ENCODE measurements at regions of chr3 and their contacts with region 1.

Region 1: DNA sequence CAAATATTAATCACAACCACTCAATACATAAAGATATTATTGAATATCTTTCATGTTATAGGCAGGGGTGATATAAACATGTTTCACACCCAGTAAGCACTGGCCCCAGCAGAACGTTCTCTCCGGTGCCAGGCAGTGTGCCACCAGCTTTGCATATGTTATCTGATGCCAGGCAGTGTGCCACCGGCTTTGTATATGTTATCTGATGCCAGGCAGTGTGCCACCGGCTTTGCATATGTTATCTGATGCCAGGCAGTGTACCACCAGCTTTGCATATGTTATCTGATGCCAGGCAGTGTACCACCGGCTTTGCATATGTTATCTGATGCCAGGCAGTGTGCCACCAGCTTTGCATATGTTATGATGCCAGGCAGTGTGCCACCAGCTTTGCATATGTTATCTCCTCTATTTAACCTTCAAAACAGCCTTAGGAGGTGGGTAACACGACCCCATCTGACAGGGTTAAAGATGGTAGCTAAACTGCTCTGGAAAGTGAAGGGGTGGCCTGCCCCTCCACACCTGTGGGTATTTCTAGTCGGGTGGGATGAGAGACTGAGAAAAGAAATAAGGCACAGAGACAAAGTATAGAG is 6.9 kb downstream of the MUC20 start:
- DNase-seq: peak; percentile 41
- H3K4me3 ChIP-seq: no peak overlapping the region
- H3K27ac ChIP-seq: peak overlapping the region; percentile 51 to 78 (median 74)
- H3K4me1 ChIP-seq: peaks cover 3 to 30% (median 17%) of the 10 kb centered on the region in 4 donors
- H3K27me3 ChIP-seq: no peaks in the 10 kb centered on the region
- CTCF ChIP-seq: no peak
- EP300 ChIP-seq: no peak
- POLR2A ChIP-seq: no peak

Region 2: DNA sequence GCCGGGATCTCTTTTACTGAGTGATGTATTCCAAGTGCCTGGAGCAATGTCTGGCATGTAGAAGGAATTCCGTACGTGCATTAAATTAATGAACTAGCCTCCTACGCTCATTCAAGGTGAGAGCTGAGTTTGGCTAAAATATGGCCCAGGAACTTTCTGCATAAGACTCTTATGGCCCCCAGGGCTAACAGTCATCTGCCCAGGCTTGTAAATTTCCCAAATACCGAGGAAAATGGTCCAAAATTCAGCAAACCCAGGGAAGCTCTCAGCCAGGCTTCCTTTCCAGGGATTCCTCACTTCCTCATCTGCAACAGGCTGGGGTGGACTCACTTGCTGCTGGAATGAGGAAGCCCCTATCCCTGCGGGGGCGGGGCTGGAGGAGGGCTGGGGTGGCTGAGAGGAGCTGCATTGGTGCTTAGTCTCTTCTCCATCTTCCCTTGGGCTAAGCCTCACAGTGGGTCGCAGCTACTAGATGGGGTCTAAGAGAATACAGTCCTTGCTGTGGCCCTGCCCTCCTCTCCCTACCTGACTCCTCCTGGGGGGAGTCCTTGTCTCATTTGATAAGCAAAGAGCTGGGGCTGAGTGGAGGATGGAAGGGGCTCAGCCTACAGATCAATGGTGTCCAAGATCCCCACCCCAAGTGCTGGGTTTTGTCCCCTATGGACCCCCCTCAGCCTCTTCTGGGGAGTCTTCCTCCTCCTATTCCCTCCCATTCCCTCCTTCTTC is 115.5 kb before region 1 on chr3:
- in situ Hi-C with region 1: loop called in 3 of 4 experiments (anchors 5 to 25 kb)
- intact Hi-C with region 1: no loop called
- DNase-seq: peak; percentile 20
- H3K4me3 ChIP-seq: no peak overlapping the region
- H3K27ac ChIP-seq: no peak overlapping the region
- H3K4me1 ChIP-seq: peaks cover 0 to 4% (median 0%) of the 10 kb centered on the region in 4 donors
- H3K27me3 ChIP-seq: no peaks in the 10 kb centered on the region
- CTCF ChIP-seq: no peak
- EP300 ChIP-seq: no peak
- POLR2A ChIP-seq: no peak

Region 3: GRCh38 chr3:195931582-195932273 is 204.0 kb after region 1 on chr3:
- in situ Hi-C with region 1: no loop called
- intact Hi-C with region 1: no loop called
- DNase-seq: no peak
- H3K4me3 ChIP-seq: no peak overlapping the region
- H3K27ac ChIP-seq: no peak overlapping the region
- H3K4me1 ChIP-seq: peaks cover 0 to 13% (median 4%) of the 10 kb centered on the region in 4 donors
- H3K27me3 ChIP-seq: no peaks in the 10 kb centered on the region
- CTCF ChIP-seq: no peak
- EP300 ChIP-seq: no peak
- POLR2A ChIP-seq: no peak

Measured in transverse colon (tissue), 4 donors.